CD4-positive, alpha-beta memory T cell (primary cell): ENCODE measurements at regions of chr2 and their contacts with region 1.

Region 1: GRCh38 chr2:25851740-25852503 is 26.4 kb downstream of the ASXL2 start:
- DNase-seq: peak; percentile 66 to 79 (median 72)
- H3K4me3 ChIP-seq: peak overlapping the region in 1 of 2 donors; percentile 13
- H3K4me3 Mint-ChIP-seq: peak overlapping the region; percentile 59 to 87 (median 80)
- H3K27ac ChIP-seq: peak overlapping the region; percentile 52
- H3K27ac Mint-ChIP-seq: peak overlapping the region; percentile 63 to 97 (median 84)
- H3K4me1 ChIP-seq: peaks cover 48% of the 10 kb centered on the region
- H3K4me1 Mint-ChIP-seq: peaks cover 37 to 50% (median 43%) of the 10 kb centered on the region in 4 donors
- H3K27me3 ChIP-seq: no peaks in the 10 kb centered on the region
- H3K27me3 Mint-ChIP-seq: no peaks in the 10 kb centered on the region

Region 2: GRCh38 chr2:25606892-25607291 is 245.0 kb before region 1 on chr2:
- CTCF ChIA-PET with region 1: interaction called, 26 read pairs
- POLR2A ChIA-PET with region 1: no interaction called
- intact Hi-C with region 1: loop called (anchors 1 kb)
- DNase-seq: peak in 4 of 5 donors; percentile 19 to 39 (median 32)
- H3K4me3 ChIP-seq: no peak overlapping the region
- H3K4me3 Mint-ChIP-seq: no peak overlapping the region
- H3K27ac ChIP-seq: no peak overlapping the region
- H3K27ac Mint-ChIP-seq: no peak overlapping the region
- H3K4me1 ChIP-seq: no peaks in the 10 kb centered on the region
- H3K4me1 Mint-ChIP-seq: peaks cover 1 to 4% (median 4%) of the 10 kb centered on the region in 4 donors
- H3K27me3 ChIP-seq: no peaks in the 10 kb centered on the region
- H3K27me3 Mint-ChIP-seq: no peaks in the 10 kb centered on the region

Region 3: GRCh38 chr2:25825238-25825637 is 26.7 kb before region 1 on chr2:
- CTCF ChIA-PET with region 1: interaction called, 29 read pairs
- POLR2A ChIA-PET with region 1: no interaction called
- intact Hi-C with region 1: no loop called
- DNase-seq: peak; percentile 42 to 64 (median 52)
- H3K4me3 ChIP-seq: no peak overlapping the region
- H3K4me3 Mint-ChIP-seq: peak overlapping the region; percentile 17 to 76 (median 68)
- H3K27ac ChIP-seq: no peak overlapping the region
- H3K27ac Mint-ChIP-seq: peak overlapping the region; percentile 33 to 84 (median 71)
- H3K4me1 ChIP-seq: peaks cover 55% of the 10 kb centered on the region
- H3K4me1 Mint-ChIP-seq: peaks cover 47 to 75% (median 58%) of the 10 kb centered on the region in 4 donors
- H3K27me3 ChIP-seq: no peaks in the 10 kb centered on the region
- H3K27me3 Mint-ChIP-seq: no peaks in the 10 kb centered on the region

Region 4: GRCh38 chr2:25867396-25868003 is 15.6 kb after region 1 on chr2:
- CTCF ChIA-PET with region 1: interaction called, 36 read pairs
- POLR2A ChIA-PET with region 1: interaction called, 6 read pairs
- intact Hi-C with region 1: no loop called
- DNase-seq: no peak
- H3K4me3 ChIP-seq: no peak overlapping the region
- H3K4me3 Mint-ChIP-seq: no peak overlapping the region
- H3K27ac ChIP-seq: no peak overlapping the region
- H3K27ac Mint-ChIP-seq: peak overlapping the region in 4 of 7 donors; percentile 1 to 39 (median 19)
- H3K4me1 ChIP-seq: peaks cover 7% of the 10 kb centered on the region
- H3K4me1 Mint-ChIP-seq: peaks cover 11 to 15% (median 13%) of the 10 kb centered on the region in 4 donors
- H3K27me3 ChIP-seq: no peaks in the 10 kb centered on the region
- H3K27me3 Mint-ChIP-seq: no peaks in the 10 kb centered on the region

Region 5: DNA sequence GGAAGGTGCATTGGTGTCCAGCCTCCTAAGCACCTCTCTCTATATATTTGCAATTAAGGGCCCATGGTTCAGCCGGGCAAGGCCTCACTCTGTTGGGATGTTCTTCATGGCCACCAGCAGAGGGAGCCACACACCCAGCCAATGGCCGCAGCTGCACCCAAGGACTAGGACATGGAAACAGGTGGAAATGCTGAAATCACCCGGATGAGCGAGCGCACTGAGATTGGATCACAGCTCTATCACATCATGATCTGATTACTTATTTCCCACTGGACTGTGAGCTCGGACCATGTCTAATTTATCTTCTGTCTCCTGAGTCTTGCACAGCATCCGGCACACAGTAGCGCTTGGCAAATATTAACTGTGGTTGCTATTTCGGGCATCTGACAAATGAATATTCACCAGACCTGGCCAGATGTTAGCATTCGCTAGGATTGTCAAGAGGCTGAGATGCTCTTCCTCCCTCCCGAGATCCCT is 99.2 kb after region 1 on chr2:
- CTCF ChIA-PET with region 1: interaction called, 49 read pairs
- POLR2A ChIA-PET with region 1: no interaction called
- intact Hi-C with region 1: loop called (anchors 1 kb)
- DNase-seq: peak; percentile 61 to 69 (median 64)
- H3K4me3 ChIP-seq: no peak overlapping the region
- H3K4me3 Mint-ChIP-seq: peak overlapping the region in 1 of 8 donors; percentile 26
- H3K27ac ChIP-seq: no peak overlapping the region
- H3K27ac Mint-ChIP-seq: peak overlapping the region in 1 of 7 donors; percentile 18
- H3K4me1 ChIP-seq: no peaks in the 10 kb centered on the region
- H3K4me1 Mint-ChIP-seq: peaks cover 2 to 6% (median 3%) of the 10 kb centered on the region in 4 donors
- H3K27me3 ChIP-seq: no peaks in the 10 kb centered on the region
- H3K27me3 Mint-ChIP-seq: no peaks in the 10 kb centered on the region

Region 6: GRCh38 chr2:26144953-26145680 is 293.2 kb after region 1 on chr2:
- CTCF ChIA-PET with region 1: interaction called, 13 read pairs
- POLR2A ChIA-PET with region 1: no interaction called
- intact Hi-C with region 1: loop called (anchors 1 kb)
- DNase-seq: peak; percentile 47 to 58 (median 49)
- H3K4me3 ChIP-seq: no peak overlapping the region
- H3K4me3 Mint-ChIP-seq: no peak overlapping the region
- H3K27ac ChIP-seq: no peak overlapping the region
- H3K27ac Mint-ChIP-seq: no peak overlapping the region
- H3K4me1 ChIP-seq: no peaks in the 10 kb centered on the region
- H3K4me1 Mint-ChIP-seq: peaks cover 0 to 4% (median 2%) of the 10 kb centered on the region in 4 donors
- H3K27me3 ChIP-seq: peaks cover 6% of the 10 kb centered on the region
- H3K27me3 Mint-ChIP-seq: peaks cover 9 to 10% of the 10 kb centered on the region in 2 donors

Region 7: GRCh38 chr2:26302846-26303245 is 450.9 kb after region 1 on chr2:
- CTCF ChIA-PET with region 1: no interaction called
- POLR2A ChIA-PET with region 1: no interaction called
- intact Hi-C with region 1: no loop called
- DNase-seq: no peak
- H3K4me3 ChIP-seq: no peak overlapping the region
- H3K4me3 Mint-ChIP-seq: no peak overlapping the region
- H3K27ac ChIP-seq: no peak overlapping the region
- H3K27ac Mint-ChIP-seq: peak overlapping the region in 1 of 7 donors; percentile 25
- H3K4me1 ChIP-seq: peaks cover 14% of the 10 kb centered on the region
- H3K4me1 Mint-ChIP-seq: no peaks in the 10 kb centered on the region
- H3K27me3 ChIP-seq: no peaks in the 10 kb centered on the region
- H3K27me3 Mint-ChIP-seq: no peaks in the 10 kb centered on the region